HEK293 (cell line): ENCODE measurements at regions of chr2 and their contacts with region 1.

Region 1: GRCh38 chr2:130342533-130343275 is at the start of gene IMP4:
- H3K4me3 ChIP-seq: peak within 1 kb of the TSS; percentile 90
- H3K27ac ChIP-seq: peak within 1 kb of the TSS; percentile 40; the same call in 1 of the 2 replicates
- H3K4me1 ChIP-seq: no peaks in the 10 kb centered on the region
- CTCF ChIP-seq: peak; percentile 89

Region 2: DNA sequence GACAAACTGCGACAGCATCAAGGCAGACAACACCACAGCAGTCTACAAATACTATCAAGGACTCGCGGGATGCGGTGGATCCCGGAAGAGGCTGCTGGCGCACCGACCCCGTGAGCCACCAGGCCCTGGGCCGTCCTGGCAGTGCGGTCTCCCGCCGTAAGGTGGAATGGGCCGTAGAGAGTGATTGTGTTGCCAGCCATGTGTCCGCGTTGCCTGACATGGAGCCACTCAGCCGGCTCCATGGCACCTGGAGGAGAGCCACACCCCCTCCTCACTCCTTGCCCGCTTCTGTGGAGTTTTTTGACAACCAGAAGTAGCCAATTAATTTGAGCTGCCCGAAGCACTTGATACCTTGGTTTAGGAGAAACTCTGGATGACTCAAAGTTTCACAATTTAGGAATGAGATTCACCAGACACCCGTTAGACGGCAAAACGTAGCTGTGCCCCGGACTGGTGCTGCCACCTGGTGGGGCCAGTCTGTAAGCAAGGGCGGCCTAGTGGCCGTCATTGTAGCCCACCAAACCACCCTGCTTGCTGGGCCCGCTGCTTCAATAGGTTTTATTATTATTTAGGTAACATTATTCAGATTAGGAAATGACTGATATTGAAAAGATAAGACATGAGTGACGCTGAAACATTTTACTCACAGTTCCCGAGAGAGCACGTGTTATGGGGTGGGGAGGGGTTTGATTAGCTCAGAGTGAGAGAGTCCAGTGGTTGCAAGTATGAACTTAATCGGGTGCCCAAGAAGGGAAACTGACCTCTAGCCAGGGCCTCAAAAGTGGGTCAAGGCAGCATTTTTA is 10.2 kb before region 1 on chr2:
- CTCF ChIA-PET with region 1: interaction called, 16 read pairs
- POLR2A ChIA-PET with region 1: no interaction called
- H3K4me3 ChIP-seq: peak overlapping the region; percentile 6
- H3K27ac ChIP-seq: no peak overlapping the region
- H3K4me1 ChIP-seq: no peaks in the 10 kb centered on the region
- CTCF ChIP-seq: peak; percentile 86

Region 3: DNA sequence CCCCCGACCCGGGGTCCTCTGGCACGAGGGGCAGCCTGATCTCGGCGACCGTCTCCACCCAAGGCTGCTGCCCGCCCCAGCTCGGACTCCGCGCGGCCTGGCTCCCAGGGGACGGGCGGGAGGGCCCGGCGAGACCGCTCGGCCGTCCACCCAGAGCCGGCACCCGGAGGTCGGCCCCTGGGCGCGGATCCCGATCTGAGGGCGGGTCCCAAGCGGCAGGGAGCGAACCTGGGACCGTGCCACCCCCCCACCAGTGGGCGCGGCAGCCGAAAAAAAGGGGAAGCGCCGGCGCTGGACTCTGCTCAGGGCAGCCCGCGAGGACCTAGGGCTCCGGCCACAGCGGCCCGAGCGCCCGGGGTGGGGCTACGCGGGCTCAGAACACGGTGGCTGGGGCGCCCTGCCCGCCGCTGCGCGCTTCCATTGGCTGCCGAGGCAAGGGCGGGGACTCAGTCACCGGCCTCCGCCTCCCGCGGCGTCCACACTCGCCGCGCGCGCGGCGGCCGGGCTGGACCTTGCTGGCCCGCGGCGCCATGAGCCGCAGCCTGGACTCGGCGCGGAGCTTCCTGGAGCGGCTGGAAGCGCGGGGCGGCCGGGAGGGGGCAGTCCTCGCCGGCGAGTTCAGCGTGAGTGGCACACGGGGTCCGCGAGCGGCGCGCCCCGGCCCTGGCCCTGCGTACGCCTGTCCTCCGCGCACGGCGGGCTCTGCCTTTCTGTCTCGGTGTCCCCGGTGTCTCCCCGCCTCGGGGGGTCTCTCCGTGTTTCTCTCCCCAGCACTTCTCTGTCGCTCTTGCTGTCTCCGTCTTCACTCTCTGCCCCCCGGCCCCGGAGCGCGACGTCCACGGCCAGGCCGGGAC is 13.1 kb after region 1 on chr2 and contains the start of gene PTPN18:
- CTCF ChIA-PET with region 1: interaction called, 5 read pairs
- POLR2A ChIA-PET with region 1: interaction called, 25 read pairs
- H3K4me3 ChIP-seq: peak within 1 kb of the TSS; percentile 69
- H3K27ac ChIP-seq: peak within 1 kb of the TSS; percentile 68; the same call in 1 of the 2 replicates
- H3K4me1 ChIP-seq: peaks cover 3% of the 10 kb centered on the region; the same call in 1 of the 2 replicates
- CTCF ChIP-seq: peak; percentile 57; the same call in 1 of the 2 replicates

Region 4: DNA sequence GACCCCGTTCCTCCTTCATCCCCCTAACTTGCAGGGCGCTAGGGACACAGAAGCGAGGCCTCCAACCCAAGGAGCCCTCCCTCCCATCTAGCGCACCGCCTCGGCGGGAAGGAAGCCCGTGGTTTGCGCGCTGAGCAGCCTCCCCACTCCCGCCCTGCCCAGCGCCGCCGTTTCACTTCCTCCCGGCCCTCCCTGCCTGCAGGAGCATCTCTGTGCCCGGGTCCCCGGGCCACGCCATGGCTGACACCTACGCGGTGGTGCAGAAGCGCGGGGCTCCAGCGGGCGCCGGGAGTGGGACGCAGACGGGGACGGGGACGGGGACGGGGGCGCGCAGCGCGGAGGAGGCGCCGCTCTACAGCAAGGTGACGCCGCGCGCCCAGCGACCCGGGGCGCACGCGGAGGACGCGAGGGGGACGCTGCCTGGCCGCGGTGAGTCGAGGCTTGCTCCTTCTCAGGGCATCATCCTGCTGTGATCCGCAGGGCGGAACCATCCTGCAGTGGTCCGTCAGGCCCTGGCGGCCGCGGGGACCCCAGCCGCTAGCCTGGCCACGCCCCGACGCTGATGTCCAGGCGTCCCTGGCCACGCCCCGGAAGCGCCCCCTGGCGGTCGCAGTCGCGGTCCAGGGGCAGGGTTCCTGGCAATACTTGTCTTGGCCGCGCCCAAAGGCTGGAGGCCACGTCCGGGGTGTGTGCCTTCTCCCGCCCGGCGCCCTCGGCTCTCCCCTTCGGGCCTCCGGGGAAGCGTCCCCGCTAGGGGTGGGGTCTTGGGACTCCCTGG is 29.5 kb after region 1 on chr2:
- CTCF ChIA-PET with region 1: interaction called, 5 read pairs
- POLR2A ChIA-PET with region 1: interaction called, 17 read pairs
- H3K4me3 ChIP-seq: peak overlapping the region; percentile 71
- H3K27ac ChIP-seq: peak overlapping the region; percentile 63; the same call in 1 of the 2 replicates
- H3K4me1 ChIP-seq: 0 out of 2 replicates have a peak, but pooled peaks cover 3% of the 10 kb centered on the region
- CTCF ChIP-seq: peak; percentile 96